GM10248 (cell line): ENCODE measurements at regions of chr1 and their contacts with region 1.

Region 1: DNA sequence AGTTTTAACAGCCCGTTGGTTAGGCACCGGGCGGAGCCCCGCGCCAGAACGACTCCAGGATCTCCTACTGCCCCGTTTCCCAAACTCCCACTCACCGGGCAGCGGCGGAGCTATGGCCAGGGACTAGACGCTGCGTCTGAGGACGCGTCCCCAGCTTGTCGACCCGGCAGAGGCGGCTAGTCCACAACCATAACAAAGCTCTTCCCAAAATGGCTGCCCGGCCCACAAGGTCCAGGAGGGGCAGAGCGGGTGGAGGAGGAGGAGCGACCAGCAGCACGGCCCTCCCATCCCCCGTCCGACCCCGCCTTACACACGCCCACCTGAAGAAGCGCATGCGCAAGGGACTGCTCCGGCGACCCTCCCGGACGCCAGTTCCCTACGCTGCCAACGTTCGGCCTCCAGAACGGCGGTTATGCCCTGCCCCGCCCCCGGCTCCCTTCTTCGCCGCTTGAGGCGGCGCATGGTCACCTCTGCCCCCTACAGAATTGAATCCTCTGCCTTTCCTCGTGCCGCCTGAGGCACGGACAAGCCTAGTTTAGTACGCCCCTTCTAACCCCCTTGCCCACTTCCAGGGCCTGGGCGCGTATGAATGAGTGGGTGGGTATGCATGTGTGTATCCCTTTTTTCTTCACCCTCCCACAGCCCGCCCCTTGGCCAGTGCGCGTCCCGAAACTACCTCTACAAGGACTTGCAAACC is at the start of gene GPBP1L1:
- DNase-seq: peak; percentile 99
- CTCF ChIP-seq: no peak

Region 2: DNA sequence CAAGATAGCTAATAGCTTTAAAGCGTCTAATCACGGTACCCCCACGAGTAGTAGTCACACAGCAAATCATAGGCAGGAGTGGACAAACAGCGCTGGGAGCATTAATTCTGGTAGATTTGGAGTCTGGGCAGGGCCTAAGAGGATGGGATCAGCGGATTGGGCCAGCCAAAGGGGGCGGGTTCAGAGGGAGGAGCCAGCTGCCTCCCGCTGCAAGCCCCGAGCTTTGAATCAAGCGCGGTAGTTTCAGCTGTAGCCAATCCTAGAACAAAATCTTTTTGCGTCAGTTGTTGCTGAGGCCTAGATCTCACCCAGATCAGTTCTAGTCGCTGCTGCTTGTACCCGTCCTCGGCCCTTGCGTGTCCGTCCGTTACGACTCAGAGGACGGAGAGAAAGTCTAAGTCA is 103.2 kb before region 1 on chr1:
- CTCF ChIA-PET with region 1: no interaction called
- POLR2A ChIA-PET with region 1: interaction called, 13 read pairs
- DNase-seq: peak; percentile 98
- CTCF ChIP-seq: no peak